ENCODE measurements at regions of chr14 and their contacts with region 1.

Region 1: GRCh38 chr14:67619446-67620216 is at the start of gene ARG2:
- DNase-seq: peak; percentile 98
- H3K4me3 Mint-ChIP-seq: peak within 1 kb of the TSS; percentile 77
- H3K27ac Mint-ChIP-seq: peak within 1 kb of the TSS; percentile 68
- H3K4me1 Mint-ChIP-seq: peaks cover 35% of the 10 kb centered on the region
- H3K27me3 Mint-ChIP-seq: peaks cover 24% of the 10 kb centered on the region

Region 2: DNA sequence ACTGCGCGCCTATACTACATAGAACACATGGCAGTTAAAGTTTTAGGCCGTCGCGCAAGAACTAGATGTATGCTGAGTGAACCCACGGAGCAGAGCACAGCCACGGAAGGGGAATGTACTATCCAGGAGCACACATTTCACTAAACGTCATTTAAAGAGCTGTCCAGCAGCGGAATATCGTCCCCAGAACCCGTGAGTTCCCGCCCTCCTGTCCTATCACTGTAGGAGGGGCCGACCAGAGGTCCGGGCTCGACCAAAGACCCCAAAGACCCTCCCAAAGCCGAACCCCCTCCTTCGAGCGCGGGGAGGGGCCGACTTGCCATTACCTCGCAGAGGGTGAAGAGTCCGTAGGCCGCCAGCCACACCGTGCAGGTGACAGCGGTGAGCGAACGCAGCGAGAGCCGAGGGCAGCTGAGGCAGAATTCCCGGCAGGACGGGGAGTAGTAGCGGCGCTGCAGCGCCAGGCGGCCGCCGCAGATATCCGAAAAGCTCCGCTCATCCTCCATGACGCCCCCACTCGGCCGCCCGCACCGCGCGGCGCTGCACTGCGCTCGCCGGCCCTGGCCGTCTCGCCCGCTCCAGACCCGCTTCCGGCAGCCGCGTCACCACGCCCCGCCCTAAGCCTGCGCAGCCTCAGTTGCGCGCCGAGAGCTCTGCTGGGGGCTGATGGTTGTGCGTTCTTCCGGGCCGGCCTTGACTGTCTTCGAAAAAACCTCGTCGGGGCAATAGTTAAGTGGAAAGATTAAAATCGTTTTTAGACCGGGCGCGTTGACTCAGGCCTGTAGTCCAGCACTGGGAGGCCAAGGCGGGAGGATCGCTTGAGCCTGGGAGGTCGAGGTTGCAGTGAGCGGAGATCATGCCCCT is 19.7 kb before region 1 on chr14 and contains the start of gene PIGH:
- CTCF ChIA-PET with region 1: interaction called, 12 read pairs
- DNase-seq: peak; percentile 95
- H3K4me3 Mint-ChIP-seq: peak within 1 kb of the TSS; percentile 94
- H3K27ac Mint-ChIP-seq: peak within 1 kb of the TSS; percentile 87
- H3K4me1 Mint-ChIP-seq: peaks cover 41% of the 10 kb centered on the region
- H3K27me3 Mint-ChIP-seq: peaks cover 17% of the 10 kb centered on the region

Region 3: GRCh38 chr14:67666750-67667449 is 47.3 kb after region 1 on chr14:
- CTCF ChIA-PET with region 1: interaction called, 96 read pairs
- DNase-seq: peak; percentile 45
- H3K4me3 Mint-ChIP-seq: no peak overlapping the region
- H3K27ac Mint-ChIP-seq: no peak overlapping the region
- H3K4me1 Mint-ChIP-seq: peaks cover 32% of the 10 kb centered on the region
- H3K27me3 Mint-ChIP-seq: no peaks in the 10 kb centered on the region

Region 4: GRCh38 chr14:67773844-67774377 is 154.3 kb after region 1 on chr14:
- CTCF ChIA-PET with region 1: no interaction called
- DNase-seq: no peak
- H3K4me3 Mint-ChIP-seq: no peak overlapping the region
- H3K27ac Mint-ChIP-seq: no peak overlapping the region
- H3K4me1 Mint-ChIP-seq: no peaks in the 10 kb centered on the region
- H3K27me3 Mint-ChIP-seq: no peaks in the 10 kb centered on the region

Measured in activated naive CD4-positive, alpha-beta T cell treated with anti-CD3 and anti-CD28 coated beads, Interleukin-2, amount 10 ng/mL, durations not matched to agents 7 days and 5 days (primary cell).